Adrenal gland (tissue), 19 donors: ENCODE measurements at regions of chr5 and their contacts with region 1.

Region 1: GRCh38 chr5:132007399-132008165 is 3.9 kb downstream of the ACSL6 start:
- DNase-seq: peak; percentile 88 to 98 (median 95)
- H3K4me3 ChIP-seq: no peak overlapping the region
- H3K27ac ChIP-seq: no peak overlapping the region
- H3K4me1 ChIP-seq: peaks cover 25 to 35% of the 10 kb centered on the region in 2 donors
- H3K27me3 ChIP-seq: no peaks in the 10 kb centered on the region
- CTCF ChIP-seq: peak; percentile 73 to 95 (median 94)
- POLR2A ChIP-seq: no peak

Region 2: GRCh38 chr5:131165119-131165727 is 842.4 kb before region 1 on chr5 and contains the start of gene HINT1:
- intact Hi-C with region 1: loop called in 1 of 2 experiments (anchors 10 kb)
- DNase-seq: peak; percentile 89 to 94 (median 93)
- H3K4me3 ChIP-seq: peak within 1 kb of the TSS; percentile 66 to 86 (median 74)
- H3K27ac ChIP-seq: peak within 1 kb of the TSS; percentile 85 to 96 (median 94)
- H3K4me1 ChIP-seq: peaks cover 9 to 19% of the 10 kb centered on the region in 2 donors
- H3K27me3 ChIP-seq: no peaks in the 10 kb centered on the region
- CTCF ChIP-seq: no peak
- POLR2A ChIP-seq: peak; percentile 45 to 69
- total RNA-seq, gene HINT1: 94.2 to 269 (median 185) TPM

Region 3: DNA sequence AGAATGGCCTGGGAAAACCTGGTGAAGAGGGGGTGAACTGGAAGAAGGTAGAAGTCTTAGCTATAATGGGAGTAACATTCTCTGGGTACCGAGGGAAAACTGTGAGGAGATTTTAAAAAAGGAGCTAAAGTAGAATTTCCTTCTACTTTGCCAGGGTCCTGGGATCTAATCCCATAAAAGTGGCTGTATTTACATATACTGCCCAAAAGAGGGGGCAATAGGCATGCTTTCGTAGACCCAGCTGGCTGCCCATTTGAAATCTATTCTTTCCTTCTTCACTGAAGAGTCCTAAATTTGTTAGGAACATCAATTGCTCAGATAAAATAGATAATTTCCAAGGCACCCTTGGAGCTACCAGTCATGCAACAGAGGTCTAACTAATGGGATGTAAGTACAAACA is 584.5 kb before region 1 on chr5:
- intact Hi-C with region 1: loop called in 1 of 2 experiments (anchors 10 kb)
- DNase-seq: no peak
- H3K4me3 ChIP-seq: no peak overlapping the region
- H3K27ac ChIP-seq: no peak overlapping the region
- H3K4me1 ChIP-seq: no peaks in the 10 kb centered on the region
- H3K27me3 ChIP-seq: no peaks in the 10 kb centered on the region
- CTCF ChIP-seq: peak; percentile 18 to 55 (median 41)
- POLR2A ChIP-seq: no peak

Region 4: GRCh38 chr5:131589510-131590348 is 417.9 kb before region 1 on chr5:
- intact Hi-C with region 1: loop called (anchors 5 kb)
- DNase-seq: peak in 3 of 7 donors; percentile 11 to 36 (median 16)
- H3K4me3 ChIP-seq: no peak overlapping the region
- H3K27ac ChIP-seq: no peak overlapping the region
- H3K4me1 ChIP-seq: peaks cover 0 to 7% of the 10 kb centered on the region in 2 donors
- H3K27me3 ChIP-seq: no peaks in the 10 kb centered on the region
- CTCF ChIP-seq: peak; percentile 75 to 97 (median 90)
- POLR2A ChIP-seq: no peak

Region 5: GRCh38 chr5:131810510-131811249 is 196.9 kb before region 1 on chr5:
- intact Hi-C with region 1: loop called (anchors 5 kb)
- DNase-seq: peak in 2 of 7 donors; percentile 15 to 38
- H3K4me3 ChIP-seq: no peak overlapping the region
- H3K27ac ChIP-seq: no peak overlapping the region
- H3K4me1 ChIP-seq: peaks cover 0 to 8% of the 10 kb centered on the region in 2 donors
- H3K27me3 ChIP-seq: no peaks in the 10 kb centered on the region
- CTCF ChIP-seq: peak; percentile 7 to 59 (median 37)
- POLR2A ChIP-seq: no peak

Region 6: GRCh38 chr5:132176987-132177386 is 169.4 kb after region 1 on chr5:
- intact Hi-C with region 1: no loop called
- DNase-seq: no peak
- H3K4me3 ChIP-seq: no peak overlapping the region
- H3K27ac ChIP-seq: no peak overlapping the region
- H3K4me1 ChIP-seq: no peaks in the 10 kb centered on the region
- H3K27me3 ChIP-seq: no peaks in the 10 kb centered on the region
- CTCF ChIP-seq: peak in 1 of 6 experiments; percentile 8
- POLR2A ChIP-seq: no peak

Region 7: GRCh38 chr5:132205385-132206125 is 198.0 kb after region 1 on chr5:
- intact Hi-C with region 1: no loop called
- DNase-seq: peak in 1 of 7 donors; percentile 40
- H3K4me3 ChIP-seq: no peak overlapping the region
- H3K27ac ChIP-seq: no peak overlapping the region
- H3K4me1 ChIP-seq: no peaks in the 10 kb centered on the region
- H3K27me3 ChIP-seq: no peaks in the 10 kb centered on the region
- CTCF ChIP-seq: no peak
- POLR2A ChIP-seq: no peak